PC-3 (cell line): ENCODE measurements at regions of chr6 and their contacts with region 1.

Region 1: GRCh38 chr6:160930547-160931377 is 60.8 kb upstream of the MAP3K4 start:
- DNase-seq: peak; percentile 74
- ATAC-seq: peak; percentile 90
- H3K4me3 ChIP-seq: peak overlapping the region; percentile 75
- H3K27ac ChIP-seq: peak overlapping the region; percentile 48
- H3K4me1 ChIP-seq: peaks cover 12% of the 10 kb centered on the region
- H3K27me3 ChIP-seq: no peaks in the 10 kb centered on the region
- CTCF ChIP-seq: peak; percentile 78

Region 2: GRCh38 chr6:160733050-160733646 is 197.6 kb before region 1 on chr6:
- CTCF ChIA-PET with region 1: no interaction called
- POLR2A ChIA-PET with region 1: no interaction called
- intact Hi-C with region 1: loop called (anchors 2 kb)
- DNase-seq: peak; percentile 68
- ATAC-seq: peak; percentile 77
- H3K4me3 ChIP-seq: no peak overlapping the region
- H3K27ac ChIP-seq: no peak overlapping the region
- H3K4me1 ChIP-seq: peaks cover 6% of the 10 kb centered on the region; the same call in 1 of the 2 replicates
- H3K27me3 ChIP-seq: no peaks in the 10 kb centered on the region
- CTCF ChIP-seq: peak; percentile 76

Region 3: DNA sequence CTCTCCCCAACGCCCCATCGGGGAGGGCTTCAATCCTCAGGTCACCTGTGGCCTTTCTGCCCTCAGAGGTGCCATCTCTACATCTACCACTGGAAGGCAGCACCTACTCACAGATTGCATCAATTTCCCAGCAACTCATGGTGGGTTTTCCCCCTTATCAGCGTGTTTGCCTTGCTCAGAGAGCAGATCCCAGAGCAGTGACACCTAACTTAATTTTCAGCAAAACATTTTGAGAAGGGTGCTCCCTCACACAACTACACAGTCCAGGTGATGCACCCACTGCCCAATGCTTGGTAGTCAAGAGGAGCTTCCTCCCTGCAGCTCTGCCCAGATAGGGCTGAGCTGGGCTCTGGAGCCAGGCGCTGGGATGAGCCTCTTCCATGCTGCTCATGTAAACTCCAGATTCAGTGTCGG is 180.5 kb before region 1 on chr6:
- CTCF ChIA-PET with region 1: interaction called, 10 read pairs
- POLR2A ChIA-PET with region 1: no interaction called
- intact Hi-C with region 1: loop called (anchors 1 kb)
- DNase-seq: peak; percentile 58
- ATAC-seq: peak; percentile 76
- H3K4me3 ChIP-seq: no peak overlapping the region
- H3K27ac ChIP-seq: 0 out of 2 replicates have a peak overlapping the region, but pooled peaks have one; percentile 16
- H3K4me1 ChIP-seq: no peaks in the 10 kb centered on the region; the same call in 1 of the 2 replicates
- H3K27me3 ChIP-seq: no peaks in the 10 kb centered on the region
- CTCF ChIP-seq: peak; percentile 91

Region 4: DNA sequence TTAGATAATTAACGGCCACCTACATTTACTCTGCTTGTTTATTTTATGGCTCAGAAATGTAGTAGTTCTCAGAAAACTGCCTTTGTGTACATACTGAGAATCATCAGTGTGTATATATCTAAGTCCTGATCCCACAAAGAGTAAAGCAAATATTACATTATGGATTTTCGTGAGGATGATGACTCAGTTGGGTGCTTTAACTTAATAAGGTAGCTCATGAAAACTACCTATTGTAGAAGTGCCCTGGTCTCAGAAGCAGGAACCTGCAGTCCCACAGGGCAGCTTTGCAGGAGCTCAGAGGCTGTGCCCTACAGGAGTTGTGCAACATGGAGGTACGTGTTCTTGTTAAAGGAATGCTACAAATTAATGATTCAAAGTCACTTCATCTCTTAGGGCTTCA is 120.5 kb before region 1 on chr6:
- CTCF ChIA-PET with region 1: no interaction called
- POLR2A ChIA-PET with region 1: no interaction called
- intact Hi-C with region 1: loop called (anchors 5 kb)
- DNase-seq: peak; percentile 95
- ATAC-seq: peak; percentile 90
- H3K4me3 ChIP-seq: peak overlapping the region; percentile 47
- H3K27ac ChIP-seq: peak overlapping the region; percentile 99
- H3K4me1 ChIP-seq: peaks cover 51% of the 10 kb centered on the region
- H3K27me3 ChIP-seq: no peaks in the 10 kb centered on the region
- CTCF ChIP-seq: no peak

Region 5: GRCh38 chr6:161010418-161010817 is 79.7 kb after region 1 on chr6:
- CTCF ChIA-PET with region 1: no interaction called
- POLR2A ChIA-PET with region 1: no interaction called
- intact Hi-C with region 1: loop called (anchors 1 kb)
- DNase-seq: peak; percentile 65
- ATAC-seq: peak; percentile 92
- H3K4me3 ChIP-seq: peak overlapping the region; percentile 24; the same call in 1 of the 2 replicates
- H3K27ac ChIP-seq: peak overlapping the region; percentile 60
- H3K4me1 ChIP-seq: peaks cover 31% of the 10 kb centered on the region
- H3K27me3 ChIP-seq: no peaks in the 10 kb centered on the region
- CTCF ChIP-seq: no peak

Region 6: DNA sequence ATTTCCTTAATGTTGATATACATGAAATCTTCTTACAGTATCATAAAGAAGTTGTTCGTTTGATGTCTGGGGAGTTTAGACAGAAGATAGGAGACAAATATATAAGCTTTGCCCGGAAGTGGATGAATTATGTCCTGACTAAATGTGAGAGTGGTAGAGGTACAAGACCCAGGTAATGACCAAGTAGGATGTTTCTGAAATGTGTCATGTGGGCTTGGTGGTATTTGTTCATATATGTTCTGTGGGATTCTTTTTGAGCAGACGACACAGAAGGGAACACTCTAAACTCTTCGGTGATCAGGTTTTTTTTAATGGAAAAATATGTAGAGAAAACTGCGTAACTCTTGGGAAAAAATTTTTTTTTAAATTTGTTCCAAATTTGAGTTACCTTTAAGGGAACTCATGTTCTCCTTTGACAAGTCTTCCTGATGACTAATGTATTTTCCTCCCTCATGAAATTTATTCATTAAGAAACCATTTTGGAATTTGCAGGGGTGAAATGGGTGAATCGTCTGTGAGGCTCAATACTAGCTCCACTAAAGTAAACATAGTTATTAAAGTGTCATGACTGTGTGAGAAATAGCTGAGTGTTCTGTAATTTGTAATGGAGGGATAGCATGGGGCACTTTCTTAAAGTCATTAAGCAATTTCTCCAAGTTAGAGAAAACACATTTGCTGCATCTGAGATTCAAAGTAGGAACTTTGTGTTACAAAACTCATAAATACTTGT is 161.4 kb after region 1 on chr6:
- CTCF ChIA-PET with region 1: no interaction called
- POLR2A ChIA-PET with region 1: no interaction called
- intact Hi-C with region 1: loop called (anchors 10 kb)
- DNase-seq: peak; percentile 36
- ATAC-seq: peak; percentile 37; the same call in 1 of the 2 replicates
- H3K4me3 ChIP-seq: no peak overlapping the region
- H3K27ac ChIP-seq: peak overlapping the region; percentile 37
- H3K4me1 ChIP-seq: peaks cover 24% of the 10 kb centered on the region
- H3K27me3 ChIP-seq: no peaks in the 10 kb centered on the region
- CTCF ChIP-seq: no peak